Activated CD8-positive, alpha-beta T cell treated with anti-CD3 and anti-CD28 coated beads, Interleukin-2, amount 10 ng/mL, durations not matched to agents 7 days and 5 days (primary cell): ENCODE measurements at regions of chr22 and their contacts with region 1.

Region 1: DNA sequence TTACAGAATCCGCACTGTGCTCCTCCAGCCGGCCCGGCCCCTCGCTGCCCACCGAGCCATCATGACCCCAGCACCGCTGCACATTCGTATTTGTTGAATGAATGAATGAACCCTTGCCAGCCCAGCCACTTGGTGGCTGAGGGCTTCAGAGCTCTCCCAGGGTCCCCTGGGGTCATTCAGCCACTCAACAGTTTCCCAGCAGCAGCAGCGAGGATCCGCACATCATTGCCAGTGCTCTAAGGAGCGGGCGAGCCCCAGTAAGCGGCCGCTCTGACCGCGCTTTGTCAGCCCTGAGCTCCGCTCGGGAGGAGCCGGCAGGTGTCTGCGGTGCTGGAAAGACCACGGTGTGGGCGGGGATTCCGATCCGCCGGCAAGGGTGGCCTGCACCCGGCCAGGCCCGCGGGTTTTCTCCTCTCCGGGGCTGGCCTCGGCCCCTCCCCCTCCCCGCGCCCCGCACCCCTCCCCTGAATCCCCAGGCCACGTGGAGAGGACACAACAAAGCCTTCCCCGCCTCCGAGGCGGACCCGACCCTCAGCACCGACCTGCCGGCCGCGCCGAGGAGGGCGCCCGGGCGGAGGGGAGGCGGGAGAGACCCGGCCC is 563 bp downstream of the BID start:
- DNase-seq: peak; percentile 76
- ATAC-seq: peak; percentile 62
- H3K4me3 Mint-ChIP-seq: peak overlapping the region; percentile 82
- H3K27ac Mint-ChIP-seq: peak overlapping the region; percentile 76
- H3K4me1 Mint-ChIP-seq: peaks cover 59% of the 10 kb centered on the region
- H3K27me3 Mint-ChIP-seq: peaks cover 7% of the 10 kb centered on the region

Region 2: GRCh38 chr22:17638432-17639246 is 135.1 kb before region 1 on chr22 and contains the start of gene BCL2L13:
- CTCF ChIA-PET with region 1: no interaction called
- POLR2A ChIA-PET with region 1: interaction called, 11 read pairs
- DNase-seq: peak; percentile 94
- ATAC-seq: peak; percentile 92
- H3K4me3 Mint-ChIP-seq: peak within 1 kb of the TSS; percentile 95
- H3K27ac Mint-ChIP-seq: peak within 1 kb of the TSS; percentile 97
- H3K4me1 Mint-ChIP-seq: peaks cover 28% of the 10 kb centered on the region
- H3K27me3 Mint-ChIP-seq: no peaks in the 10 kb centered on the region
- total RNA-seq, gene BCL2L13: 26.0 to 27.0 TPM

Region 3: GRCh38 chr22:17742527-17742902 is 31.2 kb before region 1 on chr22:
- CTCF ChIA-PET with region 1: interaction called, 15 read pairs
- POLR2A ChIA-PET with region 1: interaction called, 4 read pairs
- DNase-seq: peak; percentile 73
- ATAC-seq: peak; percentile 75
- H3K4me3 Mint-ChIP-seq: no peak overlapping the region
- H3K27ac Mint-ChIP-seq: no peak overlapping the region
- H3K4me1 Mint-ChIP-seq: no peaks in the 10 kb centered on the region
- H3K27me3 Mint-ChIP-seq: no peaks in the 10 kb centered on the region

Region 4: GRCh38 chr22:17797721-17798559 is 24.2 kb after region 1 on chr22:
- CTCF ChIA-PET with region 1: no interaction called
- POLR2A ChIA-PET with region 1: no interaction called
- DNase-seq: no peak
- ATAC-seq: peak; percentile 15
- H3K4me3 Mint-ChIP-seq: no peak overlapping the region
- H3K27ac Mint-ChIP-seq: no peak overlapping the region
- H3K4me1 Mint-ChIP-seq: peaks cover 4% of the 10 kb centered on the region
- H3K27me3 Mint-ChIP-seq: no peaks in the 10 kb centered on the region